Activated CD4-positive, alpha-beta memory T cell treated with anti-CD3 and anti-CD28 coated beads for 36 hours (primary cell): ENCODE measurements at regions of chr17 and their contacts with region 1.

Region 1: DNA sequence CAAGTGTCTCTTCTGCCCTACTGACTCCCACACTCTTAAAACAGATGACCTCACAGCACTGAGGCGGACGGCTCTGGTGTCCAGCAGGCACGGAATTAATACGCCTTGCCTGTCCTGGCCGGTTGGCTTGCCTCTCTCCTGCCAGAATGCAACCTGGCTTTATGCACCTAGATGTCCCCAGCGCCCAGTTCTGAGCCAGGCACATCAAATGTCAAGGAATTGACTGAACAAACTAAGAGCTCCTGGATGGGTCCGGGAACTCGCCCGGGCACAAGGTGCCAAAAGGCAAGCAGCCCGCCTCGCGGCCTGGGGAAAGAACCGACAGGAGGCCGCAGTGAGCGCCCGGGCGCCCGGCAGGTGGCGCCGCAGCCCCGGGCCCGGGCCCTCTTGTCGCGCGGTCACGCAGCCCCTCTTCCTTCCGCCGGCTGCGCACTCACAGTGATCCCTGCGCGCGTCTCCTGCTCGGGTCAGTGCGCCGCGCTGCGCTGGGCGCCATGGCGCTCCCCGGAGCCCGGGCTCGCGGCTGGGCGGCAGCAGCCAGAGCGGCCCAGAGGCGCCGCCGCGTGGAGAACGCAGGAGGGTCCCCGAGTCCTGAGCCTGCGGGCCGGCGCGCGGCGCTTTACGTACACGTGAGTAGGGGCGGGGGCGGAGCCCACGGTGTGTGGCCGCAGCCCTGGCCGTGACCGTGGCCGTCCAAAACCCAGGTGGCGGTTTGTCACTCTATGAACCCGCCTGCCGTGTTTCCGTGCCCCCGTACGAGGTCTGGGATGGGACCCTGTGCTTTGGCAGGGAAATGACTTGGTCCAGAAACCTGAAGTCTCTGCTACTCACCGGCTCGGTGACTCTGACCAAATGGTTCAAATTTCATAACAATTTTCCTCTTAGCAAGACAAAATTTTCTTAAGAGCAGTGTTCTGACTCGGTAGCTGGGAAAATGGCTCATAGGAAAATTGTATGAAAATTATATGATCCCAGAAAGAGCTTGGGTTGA is at the start of gene RSAD1:
- DNase-seq: peak; percentile 92
- H3K4me3 Mint-ChIP-seq: peak within 1 kb of the TSS; percentile 84
- H3K27ac Mint-ChIP-seq: peak within 1 kb of the TSS; percentile 87
- H3K4me1 Mint-ChIP-seq: peaks cover 24% of the 10 kb centered on the region
- H3K27me3 Mint-ChIP-seq: no peaks in the 10 kb centered on the region
- total RNA-seq, gene RSAD1: 31.9 to 37.2 TPM

Region 2: GRCh38 chr17:50397111-50397918 is 81.4 kb before region 1 on chr17 and contains the start of gene LRRC59:
- CTCF ChIA-PET with region 1: interaction called, 27 read pairs
- POLR2A ChIA-PET with region 1: interaction called, 9 read pairs
- intact Hi-C with region 1: loop called (anchors 1 kb)
- DNase-seq: peak; percentile 95
- H3K4me3 Mint-ChIP-seq: peak within 1 kb of the TSS; percentile 94
- H3K27ac Mint-ChIP-seq: peak within 1 kb of the TSS; percentile 82
- H3K4me1 Mint-ChIP-seq: peaks cover 27% of the 10 kb centered on the region
- H3K27me3 Mint-ChIP-seq: no peaks in the 10 kb centered on the region
- total RNA-seq, gene LRRC59: 77.1 to 78.8 TPM

Region 3: DNA sequence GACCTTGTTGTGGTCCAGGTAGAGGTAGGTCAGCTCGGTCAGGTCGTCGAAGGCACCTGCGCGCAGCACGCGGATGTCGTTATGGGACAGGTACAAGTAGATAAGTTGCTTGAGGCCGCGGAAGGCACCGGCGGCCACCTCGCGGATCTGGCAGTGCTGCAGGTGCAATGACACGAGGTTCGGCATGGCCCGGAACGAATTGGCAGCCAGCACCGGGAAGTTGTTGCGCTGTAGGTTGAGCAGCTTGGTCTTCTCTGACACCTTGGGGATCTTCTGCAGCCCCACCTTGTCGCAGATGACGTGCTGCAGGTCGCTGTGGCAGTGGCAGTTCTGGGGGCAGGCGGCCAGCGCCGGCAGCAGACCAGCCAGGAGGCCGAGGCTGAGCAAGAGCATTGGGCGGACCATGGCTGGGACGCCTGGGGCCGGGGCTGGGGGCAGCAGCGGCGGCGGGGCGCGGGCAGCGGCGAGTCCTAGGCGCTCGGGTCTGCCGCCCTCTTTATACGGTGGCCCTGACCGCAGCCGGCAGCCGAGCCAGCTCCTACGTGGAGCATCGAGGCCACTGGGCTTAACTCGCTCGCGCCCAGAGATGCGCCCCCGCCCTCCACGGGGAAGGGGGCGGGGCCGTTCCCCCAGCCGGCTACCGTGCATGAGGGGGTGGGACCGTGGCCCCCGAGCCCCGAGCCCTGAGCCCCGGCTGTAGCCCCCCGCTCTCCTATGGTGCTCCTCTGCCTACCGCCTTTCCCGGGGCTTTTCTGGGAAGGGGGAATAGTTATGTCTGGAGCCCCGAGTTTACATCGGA is 10.1 kb before region 1 on chr17 and contains the start of gene CHAD:
- CTCF ChIA-PET with region 1: interaction called, 14 read pairs
- POLR2A ChIA-PET with region 1: no interaction called
- intact Hi-C with region 1: no loop called
- DNase-seq: no peak
- H3K4me3 Mint-ChIP-seq: no peak within 1 kb of the TSS
- H3K27ac Mint-ChIP-seq: no peak within 1 kb of the TSS
- H3K4me1 Mint-ChIP-seq: peaks cover 8% of the 10 kb centered on the region
- H3K27me3 Mint-ChIP-seq: peaks cover 17% of the 10 kb centered on the region
- total RNA-seq, gene CHAD: not detected

Region 4: GRCh38 chr17:50507871-50508572 is 29.3 kb after region 1 on chr17 and contains the start of gene MYCBPAP:
- CTCF ChIA-PET with region 1: interaction called, 30 read pairs
- POLR2A ChIA-PET with region 1: no interaction called
- intact Hi-C with region 1: loop called (anchors 1 kb)
- DNase-seq: peak; percentile 90
- H3K4me3 Mint-ChIP-seq: peak within 1 kb of the TSS; percentile 95
- H3K27ac Mint-ChIP-seq: peak within 1 kb of the TSS; percentile 82
- H3K4me1 Mint-ChIP-seq: peaks cover 49% of the 10 kb centered on the region
- H3K27me3 Mint-ChIP-seq: no peaks in the 10 kb centered on the region
- total RNA-seq, gene MYCBPAP: 8.1 to 8.5 TPM

Region 5: GRCh38 chr17:50541716-50542688 is 63.3 kb after region 1 on chr17:
- CTCF ChIA-PET with region 1: interaction called, 6 read pairs
- POLR2A ChIA-PET with region 1: no interaction called
- intact Hi-C with region 1: loop called (anchors 1 kb)
- DNase-seq: peak; percentile 89
- H3K4me3 Mint-ChIP-seq: peak overlapping the region; percentile 75
- H3K27ac Mint-ChIP-seq: no peak overlapping the region
- H3K4me1 Mint-ChIP-seq: peaks cover 16% of the 10 kb centered on the region
- H3K27me3 Mint-ChIP-seq: peaks cover 6% of the 10 kb centered on the region

Region 6: DNA sequence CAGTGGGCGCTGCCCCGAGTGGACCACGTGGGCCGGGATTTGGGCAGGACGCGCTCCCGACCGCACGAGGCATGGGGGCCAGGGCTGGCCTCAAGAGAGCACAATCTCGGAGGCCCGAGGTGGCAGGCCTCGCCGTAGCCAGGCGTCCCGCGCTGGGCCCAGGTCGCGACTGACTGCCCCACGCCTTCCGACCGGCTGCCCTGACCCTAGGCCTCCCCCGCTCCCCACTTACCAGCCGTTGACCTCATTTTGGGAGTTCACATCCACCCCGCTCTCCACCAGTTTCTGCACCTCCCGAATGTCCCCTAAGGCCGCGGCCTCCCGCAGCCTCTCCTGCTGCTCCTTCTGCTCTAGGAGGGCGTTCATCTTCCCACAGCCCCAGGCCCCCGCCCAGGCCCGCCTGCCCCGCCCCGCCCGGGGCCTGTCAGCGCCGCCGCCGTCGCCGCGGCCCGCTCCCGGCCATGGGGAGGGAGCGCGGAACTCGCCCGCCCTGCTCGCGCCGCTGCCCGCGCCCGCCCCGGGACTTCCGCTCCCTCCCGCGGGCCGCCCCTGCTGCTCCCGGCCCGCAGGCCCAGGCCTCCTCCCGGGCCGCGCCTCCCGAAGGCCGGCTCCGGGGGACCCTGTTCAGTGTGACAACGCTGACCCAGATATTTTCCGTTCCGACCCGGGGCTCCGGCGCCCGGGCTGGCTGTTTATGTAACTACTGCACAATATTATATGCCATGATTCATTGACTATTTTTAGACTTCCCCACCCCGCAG is 228.8 kb after region 1 on chr17 and contains the start of gene ANKRD40:
- CTCF ChIA-PET with region 1: interaction called, 4 read pairs
- POLR2A ChIA-PET with region 1: no interaction called
- intact Hi-C with region 1: loop called (anchors 5 kb)
- DNase-seq: peak; percentile 95
- H3K4me3 Mint-ChIP-seq: peak within 1 kb of the TSS; percentile 96
- H3K27ac Mint-ChIP-seq: peak within 1 kb of the TSS; percentile 96
- H3K4me1 Mint-ChIP-seq: peaks cover 48% of the 10 kb centered on the region
- H3K27me3 Mint-ChIP-seq: no peaks in the 10 kb centered on the region
- total RNA-seq, gene ANKRD40: 27.4 to 27.8 TPM